Thyroid gland (tissue), 4 donors: ENCODE measurements at regions of chr17 and their contacts with region 1.

Region 1: GRCh38 chr17:43940630-43941029 is 1.6 kb downstream of the PPY start:
- DNase-seq: peak; percentile 60
- H3K4me3 ChIP-seq: no peak overlapping the region
- H3K27ac ChIP-seq: no peak overlapping the region
- H3K4me1 ChIP-seq: peaks cover 0 to 14% of the 10 kb centered on the region in 2 donors
- H3K27me3 ChIP-seq: no peaks in the 10 kb centered on the region
- CTCF ChIP-seq: peak in 5 of 6 experiments; percentile 35 to 60 (median 56)
- POLR2A ChIP-seq: no peak

Region 2: GRCh38 chr17:43753493-43754129 is 187.0 kb before region 1 on chr17:
- intact Hi-C with region 1: no loop called
- DNase-seq: no peak
- H3K4me3 ChIP-seq: no peak overlapping the region
- H3K27ac ChIP-seq: no peak overlapping the region
- H3K4me1 ChIP-seq: peaks cover 10% of the 10 kb centered on the region in 2 donors
- H3K27me3 ChIP-seq: no peaks in the 10 kb centered on the region
- CTCF ChIP-seq: no peak
- POLR2A ChIP-seq: no peak

Region 3: GRCh38 chr17:43994272-43995149 is 53.9 kb after region 1 on chr17:
- intact Hi-C with region 1: loop called (anchors 2 kb)
- DNase-seq: peak; percentile 75 to 85
- H3K4me3 ChIP-seq: peak overlapping the region in 1 of 3 donors; percentile 12
- H3K27ac ChIP-seq: peak overlapping the region; percentile 66 to 86 (median 78)
- H3K4me1 ChIP-seq: peaks cover 6 to 19% of the 10 kb centered on the region in 2 donors
- H3K27me3 ChIP-seq: no peaks in the 10 kb centered on the region
- CTCF ChIP-seq: peak; percentile 91 to 97 (median 93)
- POLR2A ChIP-seq: no peak

Region 4: DNA sequence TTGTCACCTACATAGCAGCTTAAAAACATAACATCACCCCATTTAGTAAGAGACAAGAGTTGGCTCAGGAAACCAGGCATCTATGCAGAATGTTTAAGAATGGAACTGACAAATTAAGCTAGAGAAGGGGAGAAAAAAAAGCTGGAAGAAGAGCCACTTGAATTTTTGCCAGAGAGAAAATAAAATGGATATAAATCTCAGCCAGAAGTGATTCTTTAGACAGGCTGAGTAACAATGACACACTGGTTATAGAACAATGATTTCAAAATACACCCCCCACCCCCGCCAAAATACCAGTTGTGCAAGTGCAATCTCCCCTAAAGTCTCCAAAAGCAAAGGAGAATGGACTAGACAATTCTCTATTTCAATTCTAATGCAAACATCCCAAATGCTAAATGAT is 103.4 kb after region 1 on chr17:
- intact Hi-C with region 1: loop called (anchors 5 kb)
- DNase-seq: no peak
- H3K4me3 ChIP-seq: no peak overlapping the region
- H3K27ac ChIP-seq: no peak overlapping the region
- H3K4me1 ChIP-seq: peaks cover 15 to 26% of the 10 kb centered on the region in 2 donors
- H3K27me3 ChIP-seq: no peaks in the 10 kb centered on the region
- CTCF ChIP-seq: no peak
- POLR2A ChIP-seq: no peak

Region 5: GRCh38 chr17:44110823-44111633 is 170.4 kb after region 1 on chr17:
- intact Hi-C with region 1: no loop called
- DNase-seq: peak; percentile 99
- H3K4me3 ChIP-seq: peak overlapping the region in 1 of 3 donors; percentile 17
- H3K27ac ChIP-seq: peak overlapping the region; percentile 73 to 84 (median 84)
- H3K4me1 ChIP-seq: peaks cover 34 to 67% of the 10 kb centered on the region in 2 donors
- H3K27me3 ChIP-seq: no peaks in the 10 kb centered on the region
- CTCF ChIP-seq: peak in 2 of 6 experiments; percentile 8 to 9
- POLR2A ChIP-seq: peak in 1 of 2 donors; percentile 89

Region 6: DNA sequence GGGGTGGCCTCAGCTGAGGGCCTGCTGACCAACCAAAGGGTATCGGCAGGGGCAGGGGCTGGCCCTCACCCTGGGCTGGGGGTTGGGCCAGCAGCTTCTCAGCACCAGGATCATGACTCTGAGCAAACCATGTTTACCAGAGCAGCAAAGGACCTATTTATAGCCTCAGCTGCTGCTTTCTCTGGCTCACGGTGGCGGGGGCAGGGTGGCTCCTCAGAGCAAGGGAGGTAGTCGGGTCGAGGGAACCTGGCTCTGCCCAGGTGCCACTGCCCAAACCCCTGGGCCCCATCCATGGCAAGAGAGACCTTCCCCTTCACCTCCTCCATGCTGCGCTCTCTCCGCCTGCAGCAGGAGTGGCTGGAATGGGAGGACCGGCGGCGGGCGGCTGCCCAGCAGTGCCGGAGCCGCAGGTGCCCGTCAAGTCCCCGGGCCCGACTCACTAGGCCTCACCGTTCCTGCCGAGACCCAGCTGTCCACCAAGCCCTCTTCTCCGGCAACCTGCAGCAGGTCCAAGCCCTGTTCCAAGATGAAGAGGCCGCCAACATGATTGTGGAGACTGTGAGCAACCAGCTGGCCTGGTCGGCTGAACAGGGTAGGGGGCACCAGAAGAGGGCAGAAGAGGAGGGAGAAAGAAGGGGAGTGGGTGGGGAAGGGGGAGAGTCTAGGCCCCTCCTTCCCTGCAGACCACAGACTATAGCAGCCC is 230.0 kb after region 1 on chr17 and contains the start of gene ASB16:
- intact Hi-C with region 1: loop called (anchors 10 kb)
- DNase-seq: peak; percentile 74 to 82
- H3K4me3 ChIP-seq: no peak within 1 kb of the TSS
- H3K27ac ChIP-seq: peak within 1 kb of the TSS; percentile 66 to 75 (median 70)
- H3K4me1 ChIP-seq: peaks cover 4 to 21% of the 10 kb centered on the region in 2 donors
- H3K27me3 ChIP-seq: no peaks in the 10 kb centered on the region
- CTCF ChIP-seq: no peak
- POLR2A ChIP-seq: peak in 1 of 2 donors; percentile 28
- total RNA-seq, gene ASB16: 1.4 to 2.4 (median 1.7) TPM

Region 7: GRCh38 chr17:44218344-44219107 is 277.9 kb after region 1 on chr17:
- intact Hi-C with region 1: no loop called
- DNase-seq: peak; percentile 84 to 88
- H3K4me3 ChIP-seq: peak overlapping the region in 2 of 3 donors; percentile 75 to 88
- H3K27ac ChIP-seq: peak overlapping the region; percentile 97 to 99 (median 98)
- H3K4me1 ChIP-seq: peaks cover 21 to 28% of the 10 kb centered on the region in 2 donors
- H3K27me3 ChIP-seq: no peaks in the 10 kb centered on the region
- CTCF ChIP-seq: peak; percentile 30 to 74 (median 44)
- POLR2A ChIP-seq: peak in 1 of 2 donors; percentile 63